ENCODE measurements at regions of chr3 and their contacts with region 1.

Region 1: GRCh38 chr3:179929091-179929529 is 107.6 kb downstream of the PEX5L start:
- DNase-seq: peak; percentile 14
- H3K4me3 Mint-ChIP-seq: no peak overlapping the region
- H3K27ac Mint-ChIP-seq: no peak overlapping the region
- H3K4me1 Mint-ChIP-seq: peaks cover 9% of the 10 kb centered on the region
- H3K27me3 Mint-ChIP-seq: peaks cover 20% of the 10 kb centered on the region

Region 2: GRCh38 chr3:178217479-178217878 is 1711.6 kb before region 1 on chr3:
- intact Hi-C with region 1: no loop called
- DNase-seq: no peak
- H3K4me3 Mint-ChIP-seq: no peak overlapping the region
- H3K27ac Mint-ChIP-seq: no peak overlapping the region
- H3K4me1 Mint-ChIP-seq: no peaks in the 10 kb centered on the region
- H3K27me3 Mint-ChIP-seq: no peaks in the 10 kb centered on the region

Region 3: DNA sequence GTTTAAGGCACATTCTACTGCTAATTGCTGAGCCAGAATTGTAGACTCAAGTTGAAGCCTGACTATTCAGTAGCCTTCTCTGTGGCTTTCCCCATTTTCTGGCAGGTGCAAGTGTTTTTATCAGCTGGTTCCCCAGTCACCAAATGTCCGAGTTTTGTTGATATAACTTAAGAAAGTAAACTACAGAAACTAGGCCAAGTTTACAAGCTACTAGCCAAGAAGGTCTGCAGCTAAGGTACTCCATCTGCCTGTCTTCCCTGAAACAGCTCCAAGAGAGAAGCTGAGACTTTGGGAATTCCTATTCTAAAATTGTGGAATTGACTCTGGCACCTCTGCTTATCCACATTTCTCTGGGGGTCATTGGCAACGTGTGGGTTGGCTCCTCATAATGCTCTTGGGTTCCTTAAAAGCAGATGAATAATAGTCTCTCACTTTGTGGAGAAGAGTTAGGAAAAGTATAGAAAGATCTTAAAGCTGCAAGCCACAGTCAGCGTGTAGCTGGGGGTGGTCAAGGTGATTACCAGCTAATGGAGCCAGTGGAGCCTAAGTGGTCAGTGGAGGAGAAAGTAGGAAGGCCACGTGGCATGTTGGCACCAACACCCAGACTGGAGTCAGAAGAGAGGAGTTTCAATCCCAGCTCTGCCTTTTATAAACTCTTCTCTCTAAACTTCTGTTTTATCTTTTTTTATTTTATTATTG is 21.2 kb before region 1 on chr3:
- intact Hi-C with region 1: no loop called
- DNase-seq: no peak
- H3K4me3 Mint-ChIP-seq: no peak overlapping the region
- H3K27ac Mint-ChIP-seq: no peak overlapping the region
- H3K4me1 Mint-ChIP-seq: no peaks in the 10 kb centered on the region
- H3K27me3 Mint-ChIP-seq: peaks cover 14% of the 10 kb centered on the region

Region 4: GRCh38 chr3:180018543-180018942 is 89.4 kb after region 1 on chr3:
- intact Hi-C with region 1: loop called (anchors 5 kb)
- DNase-seq: no peak
- H3K4me3 Mint-ChIP-seq: no peak overlapping the region
- H3K27ac Mint-ChIP-seq: no peak overlapping the region
- H3K4me1 Mint-ChIP-seq: no peaks in the 10 kb centered on the region
- H3K27me3 Mint-ChIP-seq: peaks cover 3% of the 10 kb centered on the region

Region 5: GRCh38 chr3:180036671-180037455 is 107.8 kb after region 1 on chr3 and contains the start of gene PEX5L:
- intact Hi-C with region 1: loop called (anchors 5 kb)
- DNase-seq: peak; percentile 41
- H3K4me3 Mint-ChIP-seq: peak within 1 kb of the TSS; percentile 76
- H3K27ac Mint-ChIP-seq: no peak within 1 kb of the TSS
- H3K4me1 Mint-ChIP-seq: peaks cover 12% of the 10 kb centered on the region
- H3K27me3 Mint-ChIP-seq: peaks cover 47% of the 10 kb centered on the region
- total RNA-seq, gene PEX5L: 0.05 and 0.25 TPM in 2 replicates

Region 6: DNA sequence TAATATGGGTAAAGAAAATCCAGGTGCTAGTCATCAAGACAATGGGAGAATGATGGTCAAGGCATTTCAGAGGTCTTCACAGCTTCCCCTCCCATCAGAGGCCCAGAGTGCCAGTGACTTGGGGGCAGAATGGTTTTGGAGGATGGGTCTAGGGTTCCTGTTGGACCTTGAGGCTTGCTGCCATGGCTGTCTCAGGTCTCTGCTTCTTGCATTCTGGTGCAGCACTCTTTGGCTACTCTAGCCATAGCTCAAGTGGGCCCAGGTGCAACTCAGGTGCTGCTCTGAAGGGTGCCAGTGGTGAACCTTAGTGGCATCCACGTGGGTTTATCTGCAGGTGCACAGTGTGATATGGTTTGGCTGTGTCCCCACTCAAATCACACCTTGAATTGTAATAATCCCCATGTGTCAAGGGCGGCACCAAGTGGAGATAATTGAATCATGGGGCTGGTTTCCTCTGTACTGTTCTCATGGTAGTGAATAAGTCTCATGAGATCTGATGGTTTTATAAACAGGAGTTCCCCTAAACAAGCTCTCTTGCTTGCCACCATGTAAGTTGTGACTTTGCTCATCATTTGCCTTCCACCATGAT is 156.1 kb after region 1 on chr3:
- intact Hi-C with region 1: loop called (anchors 5 kb)
- DNase-seq: no peak
- H3K4me3 Mint-ChIP-seq: no peak overlapping the region
- H3K27ac Mint-ChIP-seq: no peak overlapping the region
- H3K4me1 Mint-ChIP-seq: no peaks in the 10 kb centered on the region
- H3K27me3 Mint-ChIP-seq: no peaks in the 10 kb centered on the region

Region 7: GRCh38 chr3:180594631-180595558 is 665.8 kb after region 1 on chr3:
- intact Hi-C with region 1: loop called (anchors 10 kb)
- DNase-seq: no peak
- H3K4me3 Mint-ChIP-seq: no peak overlapping the region
- H3K27ac Mint-ChIP-seq: no peak overlapping the region
- H3K4me1 Mint-ChIP-seq: peaks cover 1% of the 10 kb centered on the region
- H3K27me3 Mint-ChIP-seq: peaks cover 22% of the 10 kb centered on the region